Naive thymus-derived CD8-positive, alpha-beta T cell (primary cell): ENCODE measurements at regions of chr2 and their contacts with region 1.

Region 1: GRCh38 chr2:233331536-233331935 is 22.8 kb upstream of the DGKD start:
- DNase-seq: peak; percentile 38 to 90 (median 80)
- ATAC-seq: peak; percentile 96
- H3K4me3 Mint-ChIP-seq: peak overlapping the region; percentile 47 to 85 (median 72)
- H3K27ac Mint-ChIP-seq: peak overlapping the region; percentile 89 to 99 (median 98)
- H3K4me1 Mint-ChIP-seq: peaks cover 29 to 76% (median 47%) of the 10 kb centered on the region in 4 donors
- H3K27me3 Mint-ChIP-seq: no peaks in the 10 kb centered on the region

Region 2: GRCh38 chr2:233225230-233226068 is 106.1 kb before region 1 on chr2:
- POLR2A ChIA-PET with region 1: no interaction called
- DNase-seq: no peak
- ATAC-seq: no peak
- H3K4me3 Mint-ChIP-seq: no peak overlapping the region
- H3K27ac Mint-ChIP-seq: peak overlapping the region in 2 of 10 donors; percentile 70 to 90
- H3K4me1 Mint-ChIP-seq: peaks cover 2 to 7% (median 5%) of the 10 kb centered on the region in 4 donors
- H3K27me3 Mint-ChIP-seq: no peaks in the 10 kb centered on the region

Region 3: DNA sequence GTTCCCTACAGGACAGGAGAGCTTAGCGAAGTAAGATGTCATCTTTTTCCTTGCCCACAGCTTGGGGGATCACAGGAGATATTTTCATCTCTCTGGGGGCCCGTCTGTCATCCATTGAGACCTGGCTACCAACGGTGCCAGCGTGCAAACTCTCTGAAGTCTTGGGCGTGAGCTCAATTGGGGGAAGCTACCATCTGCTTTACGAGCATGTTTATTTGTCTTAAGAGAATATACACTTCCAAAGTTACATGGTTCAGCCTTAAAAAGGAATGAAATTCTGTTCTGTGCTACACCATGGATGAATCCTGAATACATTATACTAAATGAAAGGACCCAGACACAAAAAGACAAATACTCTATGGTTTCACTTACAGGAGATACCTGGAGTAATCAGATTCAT is 10.4 kb before region 1 on chr2:
- POLR2A ChIA-PET with region 1: interaction called, 13 read pairs
- DNase-seq: no peak
- ATAC-seq: no peak
- H3K4me3 Mint-ChIP-seq: no peak overlapping the region
- H3K27ac Mint-ChIP-seq: peak overlapping the region in 1 of 10 donors; percentile 23
- H3K4me1 Mint-ChIP-seq: peaks cover 6 to 41% (median 16%) of the 10 kb centered on the region in 4 donors
- H3K27me3 Mint-ChIP-seq: no peaks in the 10 kb centered on the region

Region 4: GRCh38 chr2:233353769-233354499 is 22.4 kb after region 1 on chr2 and contains the start of gene DGKD:
- POLR2A ChIA-PET with region 1: interaction called, 24 read pairs
- DNase-seq: peak; percentile 46 to 92 (median 72)
- ATAC-seq: peak; percentile 70 to 81
- H3K4me3 Mint-ChIP-seq: peak within 1 kb of the TSS; percentile 87 to 97 (median 95)
- H3K27ac Mint-ChIP-seq: peak within 1 kb of the TSS; percentile 93 to 98 (median 95)
- H3K4me1 Mint-ChIP-seq: peaks cover 35 to 83% (median 80%) of the 10 kb centered on the region in 4 donors
- H3K27me3 Mint-ChIP-seq: no peaks in the 10 kb centered on the region
- polyA plus RNA-seq, gene DGKD: 29.3 to 44.5 (median 31.6) TPM